ENCODE measurements at regions of chr7 and their contacts with region 1.

Region 1: DNA sequence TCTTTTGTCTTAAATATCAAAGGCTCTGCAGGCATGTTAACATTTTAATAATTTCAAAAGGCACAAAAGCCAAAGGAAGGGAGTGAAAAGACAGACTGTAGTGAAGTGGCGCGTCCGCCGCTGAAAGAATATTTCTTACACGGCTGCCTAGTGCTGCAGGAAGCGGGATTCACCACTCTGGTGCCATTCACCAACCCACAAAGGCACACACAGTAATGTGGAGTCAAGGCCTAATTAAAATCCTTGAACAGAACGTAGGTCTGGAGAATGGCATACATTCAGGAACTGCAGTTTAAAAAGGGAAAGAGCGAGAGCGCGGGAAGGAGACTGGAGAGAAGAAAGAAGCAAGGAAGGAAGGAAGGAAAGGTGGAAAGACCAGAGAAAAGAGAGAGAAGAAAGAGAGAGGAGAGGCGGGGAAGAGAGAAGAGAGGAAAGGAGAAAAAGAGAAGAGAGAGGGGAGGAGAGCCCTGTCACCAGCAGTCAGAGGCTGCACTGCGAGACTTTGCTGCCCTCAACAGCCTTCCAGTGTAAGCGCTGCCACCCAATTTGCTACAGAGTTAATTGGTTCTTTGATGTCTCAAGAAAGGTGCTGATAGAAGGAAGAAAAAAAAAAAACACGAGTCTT is 554.0 kb downstream of the MDFIC start:
- DNase-seq: no peak
- ATAC-seq: no peak
- H3K4me3 ChIP-seq: no peak overlapping the region
- H3K27ac ChIP-seq: no peak overlapping the region
- H3K4me1 ChIP-seq: no peaks in the 10 kb centered on the region
- H3K27me3 ChIP-seq: no peaks in the 10 kb centered on the region
- CTCF ChIP-seq: no peak
- POLR2A ChIP-seq: no peak
- RAD21 ChIP-seq: no peak

Region 2: GRCh38 chr7:114048386-114049240 is 1427.3 kb before region 1 on chr7:
- CTCF ChIA-PET with region 1: no interaction called
- POLR2A ChIA-PET with region 1: no interaction called
- dilution Hi-C with region 1: no loop called
- in situ Hi-C with region 1: no loop called
- intact Hi-C with region 1: no loop called
- DNase-seq: peak; percentile 23
- ATAC-seq: peak; percentile 37
- H3K4me3 ChIP-seq: peak overlapping the region; percentile 12; the same call in 1 of the 2 replicates
- H3K27ac ChIP-seq: no peak overlapping the region
- H3K4me1 ChIP-seq: 0 out of 2 replicates have a peak, but pooled peaks cover 2% of the 10 kb centered on the region
- H3K27me3 ChIP-seq: no peaks in the 10 kb centered on the region
- CTCF ChIP-seq: no peak
- POLR2A ChIP-seq: no peak
- RAD21 ChIP-seq: no peak

Region 3: DNA sequence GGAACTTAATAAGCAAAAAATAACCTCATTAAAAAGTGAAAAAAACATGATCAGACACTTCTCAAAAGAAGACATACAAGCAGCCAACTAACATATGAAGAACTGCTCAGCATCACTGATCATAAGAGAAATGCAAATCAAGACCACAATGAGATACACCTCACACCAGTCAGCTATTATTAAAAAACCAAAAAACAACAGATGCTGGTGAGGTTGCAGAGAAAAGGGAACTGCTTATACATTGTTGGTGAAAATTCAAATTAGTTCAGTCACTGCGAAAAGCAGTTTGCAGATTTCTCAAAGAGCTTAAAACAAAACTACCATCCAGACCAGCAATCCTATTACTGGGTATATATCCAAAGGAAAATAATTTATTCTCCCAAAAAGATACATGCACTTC is 40.7 kb before region 1 on chr7:
- CTCF ChIA-PET with region 1: no interaction called
- POLR2A ChIA-PET with region 1: interaction called, 26 read pairs
- dilution Hi-C with region 1: no loop called
- in situ Hi-C with region 1: no loop called
- intact Hi-C with region 1: no loop called
- DNase-seq: no peak
- ATAC-seq: no peak
- H3K4me3 ChIP-seq: no peak overlapping the region
- H3K27ac ChIP-seq: no peak overlapping the region
- H3K4me1 ChIP-seq: no peaks in the 10 kb centered on the region
- H3K27me3 ChIP-seq: no peaks in the 10 kb centered on the region
- CTCF ChIP-seq: no peak
- POLR2A ChIP-seq: no peak
- RAD21 ChIP-seq: no peak